ENCODE measurements at regions of chr4 and their contacts with region 1.

Region 1: DNA sequence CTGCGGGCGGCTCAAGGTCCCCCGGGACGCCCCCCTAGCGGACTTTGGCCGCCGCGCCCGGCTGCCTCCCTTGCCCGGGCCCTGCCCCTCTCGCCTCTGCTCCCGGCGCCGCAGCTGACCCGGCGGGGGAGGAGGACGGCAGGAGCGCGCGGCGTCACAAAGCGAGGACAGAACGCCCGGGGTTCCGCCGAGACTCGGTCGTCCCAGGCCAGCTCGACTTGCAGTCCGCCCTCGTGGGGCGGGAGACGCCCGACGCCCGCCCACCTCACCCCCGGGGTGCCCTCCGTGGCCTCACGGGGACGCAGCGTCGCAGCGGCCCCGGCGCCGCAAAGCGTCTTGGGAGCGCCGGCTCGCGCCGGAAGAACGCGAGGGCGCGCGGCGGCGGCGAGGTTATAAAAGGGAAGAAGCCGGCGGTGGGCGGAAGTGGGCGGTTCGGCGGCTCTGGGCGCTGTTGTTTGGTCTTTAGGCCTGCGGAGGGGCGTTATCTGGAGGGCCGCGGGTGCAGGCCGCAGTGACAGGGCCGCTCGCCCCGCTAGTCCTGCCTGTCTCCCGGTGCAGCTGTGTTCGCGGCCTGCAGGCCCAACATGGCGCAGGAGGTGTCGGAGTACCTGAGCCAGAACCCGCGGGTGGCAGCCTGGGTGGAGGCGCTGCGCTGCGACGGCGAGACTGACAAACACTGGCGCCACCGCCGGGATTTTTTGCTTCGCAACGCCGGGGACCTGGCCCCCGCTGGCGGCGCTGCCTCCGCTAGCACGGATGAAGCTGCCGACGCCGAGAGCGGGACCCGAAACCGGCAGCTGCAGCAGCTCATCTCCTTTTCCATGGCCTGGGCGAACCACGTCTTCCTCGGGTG is at the start of gene CDKN2AIP:
- DNase-seq: peak; percentile 97
- H3K4me3 ChIP-seq: peak within 1 kb of the TSS; percentile 70 to 97 (median 95)
- H3K27ac ChIP-seq: peak within 1 kb of the TSS; percentile 93 to 99 (median 96)
- H3K4me1 ChIP-seq: peaks cover 32 to 56% (median 53%) of the 10 kb centered on the region in 4 donors
- H3K27me3 ChIP-seq: no peaks in the 10 kb centered on the region
- CTCF ChIP-seq: peak in 1 of 3 experiments; percentile 21
- EP300 ChIP-seq: no peak
- POLR2A ChIP-seq: peak; percentile 87
- total RNA-seq, gene CDKN2AIP: 19.4 to 21.8 (median 20.5) TPM

Region 2: GRCh38 chr4:183504064-183504929 is 59.9 kb after region 1 on chr4:
- intact Hi-C with region 1: loop called (anchors 2 kb)
- DNase-seq: peak; percentile 99
- H3K4me3 ChIP-seq: peak overlapping the region; percentile 75 to 100 (median 98)
- H3K27ac ChIP-seq: peak overlapping the region; percentile 96 to 99 (median 98)
- H3K4me1 ChIP-seq: peaks cover 8 to 46% (median 45%) of the 10 kb centered on the region in 4 donors
- H3K27me3 ChIP-seq: no peaks in the 10 kb centered on the region
- CTCF ChIP-seq: peak; percentile 39 to 49 (median 45)
- EP300 ChIP-seq: no peak
- POLR2A ChIP-seq: peak; percentile 54

Region 3: GRCh38 chr4:183987987-183988392 is 543.5 kb after region 1 on chr4:
- intact Hi-C with region 1: loop called (anchors 10 kb)
- DNase-seq: no peak
- H3K4me3 ChIP-seq: peak overlapping the region; percentile 44 to 56 (median 49)
- H3K27ac ChIP-seq: peak overlapping the region; percentile 75 to 83 (median 76)
- H3K4me1 ChIP-seq: peaks cover 21 to 31% (median 24%) of the 10 kb centered on the region in 4 donors
- H3K27me3 ChIP-seq: no peaks in the 10 kb centered on the region
- CTCF ChIP-seq: no peak
- EP300 ChIP-seq: no peak
- POLR2A ChIP-seq: no peak